Right ventricle myocardium superior (tissue), 1 donor: ENCODE measurements at regions of chr1 and their contacts with region 1.

Region 1: DNA sequence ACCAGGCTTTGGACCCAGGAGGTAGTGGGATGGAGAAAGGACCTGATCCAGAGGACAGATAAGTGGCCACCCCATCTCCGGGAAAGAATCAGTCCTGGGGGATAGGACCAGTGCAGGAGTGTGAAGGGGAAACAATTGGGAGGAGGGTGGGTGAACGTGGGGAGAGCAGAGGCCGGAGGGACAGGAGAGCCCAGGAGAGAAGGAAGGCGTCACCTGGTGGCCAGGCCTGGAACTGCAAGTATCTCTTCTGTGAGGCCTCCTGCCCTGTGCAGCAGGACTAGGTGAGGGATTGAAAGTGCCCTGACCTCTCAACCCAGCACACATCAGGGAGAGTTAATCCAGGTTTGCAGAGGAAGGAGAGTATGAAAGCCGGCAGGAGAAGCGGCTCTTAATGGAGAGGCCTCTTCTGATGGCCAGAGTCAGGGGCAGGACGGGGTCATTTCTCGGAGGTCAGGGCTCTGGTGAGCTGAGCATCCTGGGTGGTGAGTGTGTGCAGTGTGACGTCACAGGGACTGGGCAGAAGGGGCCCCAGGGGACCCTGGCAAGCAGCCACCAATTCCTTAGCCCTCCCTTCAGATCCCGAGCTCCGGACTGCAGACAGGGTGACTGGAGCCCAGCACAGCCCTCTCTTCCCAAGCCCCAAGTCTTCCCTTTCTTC is 9.2 kb upstream of the LAD1 start:
- DNase-seq: peak; percentile 90
- ATAC-seq: peak; percentile 92

Region 2: DNA sequence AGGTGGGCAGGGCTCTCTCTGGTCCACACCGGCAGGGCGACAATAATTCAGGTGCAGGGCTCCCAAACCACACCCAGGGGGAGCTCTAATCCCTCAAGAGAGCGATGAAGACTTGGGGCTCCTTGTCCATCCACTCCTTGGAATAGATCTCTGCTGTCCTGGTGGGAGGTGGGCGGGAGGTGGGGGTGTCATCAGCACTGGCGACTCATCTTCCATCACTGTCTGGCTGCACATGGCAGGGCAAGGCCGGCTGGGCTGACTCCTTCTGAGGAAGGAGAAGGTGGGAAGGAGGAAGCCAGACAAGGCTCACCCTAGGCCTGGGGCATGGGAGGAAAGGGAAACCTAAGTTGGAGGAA is 60.1 kb before region 1 on chr1:
- intact Hi-C with region 1: loop called (anchors 2 kb)
- DNase-seq: no peak
- ATAC-seq: peak; percentile 62